ENCODE measurements at regions of chr17 and their contacts with region 1.

Region 1: DNA sequence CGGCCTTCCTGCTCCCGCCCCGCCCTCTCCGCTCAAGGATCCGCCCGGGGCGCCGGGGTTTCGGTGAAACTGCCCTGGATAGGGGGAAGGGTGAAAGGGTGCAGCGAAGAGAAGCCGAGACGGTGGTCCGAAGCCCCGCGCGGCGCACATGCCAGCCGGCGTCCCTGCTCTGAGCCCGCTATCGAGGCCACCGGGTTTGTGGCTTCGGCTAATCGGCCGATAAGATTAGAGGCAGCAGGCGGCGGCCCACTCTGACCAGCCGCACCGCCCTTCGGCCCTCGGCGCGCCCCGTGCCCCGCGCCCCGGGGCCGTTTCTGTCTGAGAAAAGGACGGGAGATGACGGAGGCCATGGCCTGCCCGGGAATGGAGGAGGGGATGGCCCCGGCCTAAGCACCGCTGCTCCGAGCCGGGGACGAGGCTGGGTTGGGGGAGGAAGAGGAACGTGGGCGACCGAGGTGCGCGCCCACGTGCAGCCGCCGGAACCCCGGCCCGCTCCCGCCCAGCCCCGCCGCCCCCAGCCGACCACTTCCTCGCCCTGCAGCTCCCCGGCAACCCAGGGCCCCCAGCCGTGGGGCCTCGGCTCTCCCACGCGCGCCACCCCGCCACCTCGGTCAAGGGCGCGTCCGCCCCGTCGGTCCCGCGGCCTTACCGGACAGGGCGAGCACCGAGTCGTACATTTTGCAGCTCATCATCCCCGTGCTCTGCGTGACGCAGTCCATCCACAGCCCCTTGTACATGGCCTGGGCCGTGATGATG is 928 bp downstream of the CLDN7 start:
- DNase-seq: no peak
- H3K4me3 ChIP-seq: peak overlapping the region; percentile 14 to 50 (median 36)
- H3K27ac ChIP-seq: peak overlapping the region in 3 of 4 donors; percentile 15 to 45 (median 18)
- H3K4me1 ChIP-seq: peaks cover 0 to 34% (median 25%) of the 10 kb centered on the region in 4 donors
- H3K27me3 ChIP-seq: peaks cover 28 to 59% (median 55%) of the 10 kb centered on the region in 3 donors
- CTCF ChIP-seq: no peak
- EP300 ChIP-seq: no peak
- POLR2A ChIP-seq: no peak

Region 2: DNA sequence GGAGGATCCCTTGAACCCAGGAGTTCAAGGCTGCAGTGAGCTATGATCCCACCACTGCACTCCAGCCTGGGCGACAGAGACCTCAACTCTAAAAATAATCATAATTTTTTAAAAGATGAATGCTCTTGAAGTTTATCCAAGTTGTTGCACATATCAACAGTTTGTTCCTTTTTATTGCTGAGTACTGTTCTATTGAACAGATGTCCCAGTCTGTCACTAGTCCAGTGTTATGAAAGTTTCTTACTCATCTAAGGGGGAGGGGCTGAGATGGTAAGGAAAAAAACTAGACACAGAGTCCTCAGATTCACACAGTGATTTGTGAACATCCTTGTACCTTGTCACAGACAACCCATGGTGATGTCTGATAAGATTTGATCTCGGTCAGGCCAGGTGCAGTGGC is 78.8 kb after region 1 on chr17:
- intact Hi-C with region 1: loop called (anchors 5 kb)
- DNase-seq: no peak
- H3K4me3 ChIP-seq: no peak overlapping the region
- H3K27ac ChIP-seq: no peak overlapping the region
- H3K4me1 ChIP-seq: no peaks in the 10 kb centered on the region
- H3K27me3 ChIP-seq: peaks cover 11 to 72% (median 18%) of the 10 kb centered on the region in 3 donors
- CTCF ChIP-seq: no peak
- EP300 ChIP-seq: no peak
- POLR2A ChIP-seq: no peak